Activated CD8-positive, alpha-beta T cell treated with anti-CD3 and anti-CD28 coated beads for 36 hours (primary cell): ENCODE measurements at regions of chr5 and their contacts with region 1.

Region 1: GRCh38 chr5:81751009-81751835 is at the start of gene SSBP2:
- DNase-seq: peak; percentile 95
- ATAC-seq: peak; percentile 93
- H3K4me3 Mint-ChIP-seq: peak within 1 kb of the TSS; percentile 87
- H3K27ac Mint-ChIP-seq: peak within 1 kb of the TSS; percentile 85
- H3K4me1 Mint-ChIP-seq: peaks cover 26% of the 10 kb centered on the region
- H3K27me3 Mint-ChIP-seq: peaks cover 3% of the 10 kb centered on the region
- CTCF ChIP-seq: no peak
- total RNA-seq, gene SSBP2: 11.7 to 12.9 TPM

Region 2: DNA sequence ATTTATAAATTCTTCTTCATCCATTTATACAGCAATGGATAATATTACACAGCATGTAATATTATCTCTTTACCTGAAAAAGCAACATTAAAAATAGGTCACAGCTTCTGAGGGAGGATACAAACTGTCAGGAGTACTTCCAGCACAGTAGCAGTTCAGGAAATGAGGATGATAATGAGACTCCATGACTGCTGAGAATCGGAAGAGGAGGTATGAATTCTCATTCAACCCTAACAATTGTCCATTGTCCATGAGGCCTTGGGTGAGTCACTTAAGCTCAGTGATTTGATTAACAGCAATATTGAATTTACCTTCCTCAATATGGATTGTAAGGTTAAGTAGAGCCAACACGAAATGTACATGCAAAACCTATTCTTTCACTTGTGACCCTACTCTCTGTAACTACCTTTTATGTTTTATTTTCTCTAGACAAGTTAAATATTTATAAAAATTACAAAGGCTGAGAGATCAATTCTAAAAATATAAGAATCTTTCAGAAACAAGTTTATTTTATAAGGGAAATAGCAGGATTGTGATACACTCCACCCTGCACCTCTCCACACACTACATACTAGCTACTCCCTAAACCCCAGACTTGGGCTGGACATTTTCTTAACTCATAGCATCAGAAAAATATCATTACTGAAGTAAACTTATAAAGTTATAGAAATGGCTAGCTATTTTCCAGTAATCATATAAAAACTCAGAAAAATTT is 198.2 kb before region 1 on chr5:
- CTCF ChIA-PET with region 1: no interaction called
- POLR2A ChIA-PET with region 1: no interaction called
- intact Hi-C with region 1: no loop called
- DNase-seq: no peak
- ATAC-seq: no peak
- H3K4me3 Mint-ChIP-seq: no peak overlapping the region
- H3K27ac Mint-ChIP-seq: no peak overlapping the region
- H3K4me1 Mint-ChIP-seq: peaks cover 23% of the 10 kb centered on the region
- H3K27me3 Mint-ChIP-seq: no peaks in the 10 kb centered on the region
- CTCF ChIP-seq: no peak

Region 3: GRCh38 chr5:81740758-81741157 is 10.5 kb before region 1 on chr5:
- CTCF ChIA-PET with region 1: no interaction called
- POLR2A ChIA-PET with region 1: interaction called, 12 read pairs
- intact Hi-C with region 1: no loop called
- DNase-seq: no peak
- ATAC-seq: no peak
- H3K4me3 Mint-ChIP-seq: no peak overlapping the region
- H3K27ac Mint-ChIP-seq: no peak overlapping the region
- H3K4me1 Mint-ChIP-seq: peaks cover 15% of the 10 kb centered on the region
- H3K27me3 Mint-ChIP-seq: no peaks in the 10 kb centered on the region
- CTCF ChIP-seq: no peak